Posterior vena cava (tissue), 2 donors: ENCODE measurements at regions of chr14 and their contacts with region 1.

Region 1: DNA sequence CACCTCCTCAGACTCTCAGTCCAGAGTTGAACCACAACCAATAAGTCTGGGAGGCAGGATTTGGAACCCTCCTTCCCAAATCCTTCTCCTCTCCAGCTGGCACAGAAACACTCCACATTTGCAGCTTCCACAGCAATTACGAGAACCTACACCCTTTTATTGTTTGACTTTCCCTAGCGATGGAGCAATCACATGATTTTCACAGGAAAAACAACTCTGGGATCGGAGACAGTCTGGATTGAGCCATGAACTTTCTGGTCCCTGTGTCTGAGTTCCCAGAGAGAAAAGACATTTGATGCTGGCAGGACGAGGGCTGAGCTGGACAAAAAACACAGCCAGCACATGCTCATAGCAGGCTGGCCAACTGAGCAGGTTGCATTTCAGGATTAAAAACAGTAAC is 49.0 kb upstream of the STON2 start:
- DNase-seq: no peak

Region 2: DNA sequence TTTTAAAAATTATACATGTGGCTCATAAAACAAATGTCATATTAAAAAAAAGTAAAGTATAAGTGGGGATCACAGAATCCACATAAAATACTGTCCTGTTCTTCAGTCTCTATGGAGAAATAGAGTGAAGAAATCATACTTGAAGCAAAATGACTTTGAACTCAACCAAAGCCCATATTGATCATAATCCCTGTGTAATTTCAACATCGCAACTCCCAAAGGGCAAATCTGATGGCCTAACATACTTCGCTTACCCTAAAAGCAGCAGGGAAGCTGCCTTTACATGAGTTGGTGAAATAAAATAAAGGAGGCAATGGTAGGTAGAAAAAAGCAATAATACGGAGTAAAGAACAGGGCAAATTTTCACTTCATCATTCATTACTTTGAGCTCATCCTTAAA is 609.4 kb before region 1 on chr14:
- intact Hi-C with region 1: no loop called
- DNase-seq: no peak

Region 3: GRCh38 chr14:81276073-81277069 is 172.7 kb before region 1 on chr14:
- intact Hi-C with region 1: loop called (anchors 5 to 10 kb)
- DNase-seq: no peak